Activated CD8-positive, alpha-beta T cell treated with anti-CD3 and anti-CD28 coated beads for 36 hours (primary cell): ENCODE measurements at regions of chr11 and their contacts with region 1.

Region 1: DNA sequence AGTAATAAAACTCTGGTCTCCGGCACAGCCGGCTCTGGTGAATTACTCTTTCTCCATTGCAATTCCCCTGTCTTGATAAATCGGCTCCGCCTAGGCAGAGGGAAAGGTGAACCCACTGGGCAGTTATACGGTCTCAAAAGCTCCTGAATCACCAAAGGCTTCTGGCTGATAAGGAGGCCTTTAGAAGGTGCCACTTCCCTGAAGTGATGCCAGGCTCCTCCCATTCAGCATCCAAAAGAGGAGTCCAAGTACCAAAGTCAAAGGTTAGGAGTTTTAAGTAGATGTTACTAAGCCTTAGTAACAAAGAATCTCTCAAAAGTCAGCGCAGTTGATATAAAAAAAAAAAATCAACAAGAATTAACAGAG is 11.8 kb upstream of the ALKBH8 start:
- DNase-seq: no peak
- ATAC-seq: no peak
- H3K4me3 Mint-ChIP-seq: no peak overlapping the region
- H3K27ac Mint-ChIP-seq: no peak overlapping the region
- H3K4me1 Mint-ChIP-seq: peaks cover 3% of the 10 kb centered on the region
- H3K27me3 Mint-ChIP-seq: peaks cover 10% of the 10 kb centered on the region
- CTCF ChIP-seq: no peak

Region 2: GRCh38 chr11:107473792-107474191 is 103.5 kb before region 1 on chr11:
- CTCF ChIA-PET with region 1: no interaction called
- POLR2A ChIA-PET with region 1: no interaction called
- intact Hi-C with region 1: no loop called
- DNase-seq: no peak
- ATAC-seq: no peak
- H3K4me3 Mint-ChIP-seq: no peak overlapping the region
- H3K27ac Mint-ChIP-seq: no peak overlapping the region
- H3K4me1 Mint-ChIP-seq: no peaks in the 10 kb centered on the region
- H3K27me3 Mint-ChIP-seq: peaks cover 45% of the 10 kb centered on the region
- CTCF ChIP-seq: no peak

Region 3: DNA sequence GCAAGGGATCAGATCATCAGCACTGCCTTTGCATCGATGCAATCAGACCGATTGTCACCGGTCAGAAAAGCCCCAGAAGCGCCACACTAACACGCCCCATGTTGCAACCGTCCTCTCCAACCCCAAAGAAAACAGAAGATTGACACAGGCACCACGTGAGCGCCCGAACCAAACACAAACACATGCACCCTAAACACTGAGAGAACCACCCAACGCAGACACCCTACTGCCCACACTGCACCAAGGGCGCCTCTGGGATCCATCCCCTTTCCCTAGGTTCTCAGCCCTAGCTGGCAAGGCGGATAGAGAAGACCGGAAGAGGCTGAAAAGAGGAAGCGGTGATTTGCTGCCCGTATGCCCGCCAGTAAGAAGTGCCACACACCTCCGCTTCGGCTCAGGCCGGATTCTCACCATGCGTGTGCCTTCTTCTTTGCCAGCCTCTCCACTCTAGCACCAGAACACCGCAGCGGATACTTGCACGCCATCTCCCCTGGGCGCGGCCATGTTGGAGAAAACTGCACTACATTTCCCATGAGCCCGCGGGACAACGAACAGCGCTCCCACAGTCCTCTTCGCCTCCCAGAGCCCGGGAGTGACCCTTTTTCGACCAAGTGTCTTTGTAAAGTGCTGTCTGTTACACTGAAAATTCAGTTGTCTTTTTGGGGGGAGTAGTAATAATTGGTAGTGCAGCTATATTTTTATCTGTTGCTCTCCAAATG is 12.0 kb before region 1 on chr11 and contains the start of gene ALKBH8:
- CTCF ChIA-PET with region 1: interaction called, 18 read pairs
- POLR2A ChIA-PET with region 1: no interaction called
- intact Hi-C with region 1: no loop called
- DNase-seq: peak; percentile 91
- ATAC-seq: peak; percentile 89
- H3K4me3 Mint-ChIP-seq: peak within 1 kb of the TSS; percentile 99
- H3K27ac Mint-ChIP-seq: peak within 1 kb of the TSS; percentile 100
- H3K4me1 Mint-ChIP-seq: peaks cover 62% of the 10 kb centered on the region
- H3K27me3 Mint-ChIP-seq: no peaks in the 10 kb centered on the region
- CTCF ChIP-seq: no peak
- total RNA-seq, gene ALKBH8: 13.3 to 13.4 TPM